GM12878 (cell line): ENCODE measurements at regions of chr14 and their contacts with region 1.

Region 1: DNA sequence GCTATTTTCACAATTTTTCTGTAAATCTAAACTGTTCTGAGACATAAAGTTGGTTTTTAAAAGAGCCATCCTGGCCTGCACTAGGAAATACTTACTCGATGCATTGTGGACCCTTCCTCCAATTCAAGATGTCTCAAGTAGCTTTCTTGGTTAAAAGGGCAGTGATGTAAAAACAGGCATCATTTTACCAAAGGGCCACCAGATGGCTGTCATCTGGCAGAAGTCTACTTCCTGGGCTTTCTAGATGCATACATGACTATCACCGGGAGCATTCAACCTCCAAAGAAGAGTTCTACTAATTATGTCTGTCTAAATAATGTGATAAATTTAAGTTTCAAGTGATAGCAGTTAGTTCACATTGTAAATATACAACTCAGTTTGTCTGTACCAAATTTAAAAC is 96.8 kb upstream of the FRMD6 start:
- DNase-seq: no peak
- ATAC-seq: peak; percentile 37; the same call in 2 of the 3 replicates
- H3K4me3 ChIP-seq: no peak overlapping the region
- H3K27ac ChIP-seq: no peak overlapping the region
- H3K4me1 ChIP-seq: no peaks in the 10 kb centered on the region
- H3K27me3 ChIP-seq: peaks cover 2 to 3% of the 10 kb centered on the region in 2 experiments; a peak in 2 of 4 replicates
- CTCF ChIP-seq: peak in 2 of 3 experiments; percentile 28 to 29; a peak in 4 of 6 replicates
- EP300 ChIP-seq: no peak
- POLR2A ChIP-seq: no peak
- RAD21 ChIP-seq: peak; percentile 55

Region 2: DNA sequence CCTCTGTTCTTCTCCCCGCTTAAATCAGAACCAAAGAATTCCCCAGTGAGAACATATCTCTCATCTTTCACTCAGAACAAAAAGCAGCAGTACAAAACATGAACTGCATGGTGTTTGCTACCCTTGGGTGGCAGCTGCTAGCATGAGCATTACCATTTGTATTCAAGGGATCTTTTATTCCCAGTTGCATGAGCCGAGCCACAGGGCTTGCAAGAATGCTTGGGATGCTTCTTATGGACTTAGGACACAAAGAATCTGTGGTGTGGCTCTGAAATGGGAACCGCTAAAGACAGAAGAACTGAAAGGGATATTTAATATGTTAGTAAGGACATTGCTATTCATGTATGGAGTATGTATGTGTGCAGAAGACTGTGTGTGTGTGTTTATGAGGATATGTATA is 124.3 kb before region 1 on chr14:
- CTCF ChIA-PET with region 1: no interaction called
- POLR2A ChIA-PET with region 1: no interaction called
- RAD21 ChIA-PET with region 1: no interaction called
- SMC1A ChIA-PET with region 1: no interaction called
- in situ Hi-C with region 1: no loop called
- intact Hi-C with region 1: loop called (anchors 5 kb)
- DNase-seq: no peak
- ATAC-seq: peak; percentile 44
- H3K4me3 ChIP-seq: no peak overlapping the region
- H3K27ac ChIP-seq: no peak overlapping the region
- H3K4me1 ChIP-seq: no peaks in the 10 kb centered on the region
- H3K27me3 ChIP-seq: no peaks in the 10 kb centered on the region; a peak in 1 of 4 replicates
- CTCF ChIP-seq: no peak
- EP300 ChIP-seq: no peak
- POLR2A ChIP-seq: no peak
- RAD21 ChIP-seq: no peak

Region 3: GRCh38 chr14:51581017-51581881 is 26.3 kb after region 1 on chr14:
- CTCF ChIA-PET with region 1: no interaction called
- POLR2A ChIA-PET with region 1: no interaction called
- RAD21 ChIA-PET with region 1: no interaction called
- SMC1A ChIA-PET with region 1: no interaction called
- in situ Hi-C with region 1: no loop called
- intact Hi-C with region 1: no loop called
- DNase-seq: no peak
- ATAC-seq: no peak
- H3K4me3 ChIP-seq: no peak overlapping the region
- H3K27ac ChIP-seq: no peak overlapping the region
- H3K4me1 ChIP-seq: no peaks in the 10 kb centered on the region
- H3K27me3 ChIP-seq: no peaks in the 10 kb centered on the region
- CTCF ChIP-seq: no peak
- EP300 ChIP-seq: no peak
- POLR2A ChIP-seq: no peak
- RAD21 ChIP-seq: no peak